ENCODE measurements at regions of chr5 and their contacts with region 1.

Region 1: GRCh38 chr5:77143998-77144836 is 57.1 kb upstream of the ZBED3 start:
- ATAC-seq: peak; percentile 41 to 84 (median 66)
- H3K4me3 ChIP-seq: no peak overlapping the region
- H3K27ac ChIP-seq: no peak overlapping the region
- H3K4me1 ChIP-seq: peaks cover 0 to 5% of the 10 kb centered on the region in 2 donors

Region 2: GRCh38 chr5:77239126-77239741 is 95.0 kb after region 1 on chr5:
- in situ Hi-C with region 1: loop called in 1 of 9 experiments (anchors 25 kb)
- ATAC-seq: peak in 3 of 8 experiments; percentile 29 to 47 (median 44)
- H3K4me3 ChIP-seq: no peak overlapping the region
- H3K27ac ChIP-seq: no peak overlapping the region
- H3K4me1 ChIP-seq: no peaks in the 10 kb centered on the region

Region 3: DNA sequence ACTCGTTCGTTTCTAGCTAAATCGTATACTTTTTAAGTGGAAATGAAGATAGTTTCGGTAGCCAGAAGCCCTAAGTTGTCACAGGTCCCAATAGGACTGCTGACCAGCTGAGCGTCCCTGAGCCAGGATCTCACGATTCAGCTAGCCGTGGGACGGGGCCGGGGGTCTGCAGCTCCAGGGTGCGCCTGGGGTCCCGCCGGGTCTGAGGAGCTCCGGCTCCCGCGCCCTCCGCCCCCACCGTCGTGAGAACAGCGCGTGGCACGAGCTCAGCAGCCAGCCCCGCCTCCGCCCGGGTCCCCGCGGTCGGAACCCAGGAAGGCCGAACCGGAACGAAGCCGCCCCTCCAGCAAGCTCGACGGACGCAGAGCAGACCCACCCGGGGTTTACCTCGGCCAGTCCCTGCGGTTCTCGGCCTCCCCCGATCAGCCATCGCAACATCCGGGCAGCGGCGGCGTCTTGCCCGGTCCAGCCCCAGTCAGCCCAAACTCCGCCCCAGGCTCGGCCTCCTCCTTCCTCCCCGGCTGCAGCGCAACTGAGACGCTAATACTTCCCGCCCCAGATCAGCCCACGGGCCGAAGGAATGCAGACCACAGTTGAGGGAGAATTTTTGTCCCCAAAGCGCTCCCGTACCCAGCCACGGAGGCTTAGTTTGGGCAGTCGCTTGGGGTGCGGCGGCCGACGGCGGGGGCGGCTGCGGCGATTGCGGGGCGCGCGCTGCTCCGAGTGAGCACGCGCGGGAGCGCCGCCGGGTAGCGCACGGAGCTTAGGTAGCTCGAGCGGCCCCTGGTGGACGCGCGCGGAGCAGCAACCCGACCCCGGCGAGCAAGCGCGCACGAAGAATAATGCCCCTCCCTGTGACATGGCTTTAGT is 347.8 kb after region 1 on chr5 and contains the start of gene WDR41:
- in situ Hi-C with region 1: loop called in 1 of 9 experiments (anchors 25 kb)
- ATAC-seq: peak; percentile 90 to 95 (median 93)
- H3K4me3 ChIP-seq: peak within 1 kb of the TSS; percentile 72 to 88 (median 76)
- H3K27ac ChIP-seq: peak within 1 kb of the TSS; percentile 85 to 88
- H3K4me1 ChIP-seq: peaks cover 4 to 15% of the 10 kb centered on the region in 2 donors
- total RNA-seq, gene WDR41: 26.1 to 117 (median 49.1) TPM